ENCODE measurements at regions of chr18 and their contacts with region 1.

Region 1: DNA sequence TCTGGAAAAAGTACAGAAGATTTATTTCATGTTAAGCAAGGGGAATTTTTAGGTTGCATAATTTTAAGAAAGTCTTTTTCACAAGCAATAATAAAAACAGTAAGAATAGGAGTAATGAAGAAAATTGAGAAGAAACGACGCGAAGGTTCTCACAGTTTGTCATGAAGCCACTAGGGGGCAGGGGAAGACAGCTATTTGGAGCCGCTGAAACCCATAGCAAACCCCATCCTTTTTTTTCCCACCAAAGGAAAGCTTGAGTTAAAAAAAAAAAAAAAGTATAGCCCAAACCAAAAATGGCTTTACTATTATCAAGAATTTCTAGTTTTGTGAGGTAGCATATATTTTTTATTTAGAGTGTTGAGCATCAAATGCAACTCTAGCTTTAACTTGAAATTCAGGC is 300.9 kb downstream of the PHLPP1 start:
- DNase-seq: peak; percentile 52
- ATAC-seq: peak; percentile 60
- H3K4me3 Mint-ChIP-seq: no peak overlapping the region
- H3K27ac Mint-ChIP-seq: no peak overlapping the region
- H3K4me1 Mint-ChIP-seq: no peaks in the 10 kb centered on the region
- H3K27me3 Mint-ChIP-seq: peaks cover 61% of the 10 kb centered on the region

Region 2: DNA sequence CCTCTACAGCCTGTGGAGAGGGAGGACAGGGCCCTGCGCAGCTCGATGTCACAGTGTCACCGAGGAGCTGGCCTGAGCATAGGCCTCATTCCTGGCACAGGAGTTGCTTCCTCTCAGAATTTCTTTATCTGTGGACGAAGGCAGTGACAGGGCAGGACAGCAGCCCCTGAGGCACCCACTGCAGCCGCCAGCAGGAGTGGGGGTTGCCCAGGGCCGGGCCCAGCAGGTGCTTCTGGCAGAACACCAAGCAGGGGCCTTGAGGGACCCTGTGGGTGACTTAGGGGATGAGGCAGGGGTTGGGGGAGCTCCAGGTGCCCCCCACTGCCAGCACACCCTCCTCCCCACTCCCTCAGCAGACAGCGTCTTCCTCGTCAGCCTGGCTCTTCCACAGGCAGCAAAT is 11.0 kb before region 1 on chr18:
- CTCF ChIA-PET with region 1: interaction called, 10 read pairs
- DNase-seq: no peak
- ATAC-seq: no peak
- H3K4me3 Mint-ChIP-seq: no peak overlapping the region
- H3K27ac Mint-ChIP-seq: no peak overlapping the region
- H3K4me1 Mint-ChIP-seq: no peaks in the 10 kb centered on the region
- H3K27me3 Mint-ChIP-seq: peaks cover 13% of the 10 kb centered on the region

Region 3: DNA sequence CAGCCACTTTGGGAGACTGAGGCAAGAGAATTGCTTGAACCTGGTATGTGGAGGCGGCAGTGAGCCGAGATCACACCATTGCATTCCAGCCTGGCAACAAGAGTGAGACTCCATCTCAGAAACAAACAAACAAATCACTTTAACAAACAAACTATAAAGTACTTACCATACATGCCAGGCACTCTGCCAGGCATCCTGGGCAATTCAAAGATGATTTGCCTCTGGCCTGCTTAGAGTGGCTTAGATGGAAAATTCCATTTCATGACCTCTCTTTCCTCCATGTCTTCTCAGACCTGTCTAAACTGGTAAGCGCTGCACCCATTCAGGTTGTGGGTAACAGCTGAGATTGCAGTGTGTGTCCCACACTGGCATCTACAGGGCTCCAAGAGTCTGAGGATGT is 30.1 kb after region 1 on chr18:
- CTCF ChIA-PET with region 1: interaction called, 12 read pairs
- DNase-seq: no peak
- ATAC-seq: no peak
- H3K4me3 Mint-ChIP-seq: no peak overlapping the region
- H3K27ac Mint-ChIP-seq: no peak overlapping the region
- H3K4me1 Mint-ChIP-seq: peaks cover 15% of the 10 kb centered on the region
- H3K27me3 Mint-ChIP-seq: peaks cover 42% of the 10 kb centered on the region

Region 4: GRCh38 chr18:63073481-63073880 is 57.2 kb after region 1 on chr18:
- CTCF ChIA-PET with region 1: interaction called, 10 read pairs
- DNase-seq: no peak
- ATAC-seq: no peak
- H3K4me3 Mint-ChIP-seq: no peak overlapping the region
- H3K27ac Mint-ChIP-seq: no peak overlapping the region
- H3K4me1 Mint-ChIP-seq: peaks cover 16% of the 10 kb centered on the region
- H3K27me3 Mint-ChIP-seq: peaks cover 29% of the 10 kb centered on the region

Region 5: GRCh38 chr18:63339920-63340484 is 323.7 kb after region 1 on chr18:
- CTCF ChIA-PET with region 1: interaction called, 28 read pairs
- DNase-seq: peak; percentile 51
- ATAC-seq: peak; percentile 39
- H3K4me3 Mint-ChIP-seq: no peak overlapping the region
- H3K27ac Mint-ChIP-seq: peak overlapping the region; percentile 47
- H3K4me1 Mint-ChIP-seq: peaks cover 6% of the 10 kb centered on the region
- H3K27me3 Mint-ChIP-seq: no peaks in the 10 kb centered on the region